T-cell (primary cell): ENCODE measurements at regions of chr12 and their contacts with region 1.

Region 1: DNA sequence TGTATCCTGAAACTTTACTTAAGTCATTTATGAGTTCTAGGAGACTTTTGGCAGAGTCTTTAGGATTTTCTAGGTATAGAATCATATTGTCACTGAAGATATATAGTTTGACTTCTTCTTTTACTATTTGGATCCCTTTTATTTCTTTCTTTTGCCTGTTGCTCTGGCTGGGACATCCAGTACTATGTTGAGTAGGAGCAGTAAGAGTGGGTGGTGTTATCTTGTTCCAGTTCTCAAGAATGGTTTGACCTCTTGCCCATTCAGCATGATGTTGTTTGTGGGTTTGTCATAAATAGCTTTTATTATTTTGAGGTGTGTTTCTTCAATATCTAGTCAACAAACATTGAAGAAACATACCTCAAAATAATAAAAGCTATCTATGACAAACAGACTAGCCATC is 35.0 kb downstream of the LIN7A start:
- DNase-seq: no peak
- ATAC-seq: no peak
- H3K4me3 ChIP-seq: no peak overlapping the region
- H3K4me3 Mint-ChIP-seq: no peak overlapping the region
- H3K27ac ChIP-seq: no peak overlapping the region
- H3K27ac Mint-ChIP-seq: no peak overlapping the region
- H3K4me1 ChIP-seq: no peaks in the 10 kb centered on the region
- H3K4me1 Mint-ChIP-seq: no peaks in the 10 kb centered on the region
- H3K27me3 ChIP-seq: no peaks in the 10 kb centered on the region
- H3K27me3 Mint-ChIP-seq: no peaks in the 10 kb centered on the region

Region 2: GRCh38 chr12:80925234-80925633 is 22.5 kb after region 1 on chr12:
- CTCF ChIA-PET with region 1: no interaction called
- POLR2A ChIA-PET with region 1: no interaction called
- DNase-seq: no peak
- ATAC-seq: no peak
- H3K4me3 ChIP-seq: no peak overlapping the region
- H3K4me3 Mint-ChIP-seq: no peak overlapping the region
- H3K27ac ChIP-seq: no peak overlapping the region
- H3K27ac Mint-ChIP-seq: no peak overlapping the region
- H3K4me1 ChIP-seq: no peaks in the 10 kb centered on the region
- H3K4me1 Mint-ChIP-seq: no peaks in the 10 kb centered on the region
- H3K27me3 ChIP-seq: no peaks in the 10 kb centered on the region
- H3K27me3 Mint-ChIP-seq: no peaks in the 10 kb centered on the region

Region 3: GRCh38 chr12:80941916-80942315 is 39.2 kb after region 1 on chr12:
- CTCF ChIA-PET with region 1: no interaction called
- POLR2A ChIA-PET with region 1: interaction called in 1 of 2 experiments, 12 read pairs
- DNase-seq: no peak
- ATAC-seq: no peak
- H3K4me3 ChIP-seq: no peak overlapping the region
- H3K4me3 Mint-ChIP-seq: no peak overlapping the region
- H3K27ac ChIP-seq: no peak overlapping the region
- H3K27ac Mint-ChIP-seq: no peak overlapping the region
- H3K4me1 ChIP-seq: no peaks in the 10 kb centered on the region
- H3K4me1 Mint-ChIP-seq: no peaks in the 10 kb centered on the region
- H3K27me3 ChIP-seq: peaks cover 0 to 10% of the 10 kb centered on the region in 2 experiments
- H3K27me3 Mint-ChIP-seq: peaks cover 5 to 12% of the 10 kb centered on the region in 2 donors